Endothelial cell of umbilical vein (primary cell): ENCODE measurements at regions of chr7 and their contacts with region 1.

Region 1: GRCh38 chr7:87416682-87417587 is 58.5 kb downstream of the ABCB4 start:
- DNase-seq: peak; percentile 84
- H3K4me3 ChIP-seq: no peak overlapping the region
- H3K27ac ChIP-seq: no peak overlapping the region
- H3K4me1 ChIP-seq: no peaks in the 10 kb centered on the region
- H3K27me3 ChIP-seq: peaks cover 8 to 12% of the 10 kb centered on the region in 2 experiments
- CTCF ChIP-seq: peak; percentile 41 to 44
- POLR2A ChIP-seq: no peak

Region 2: GRCh38 chr7:87231256-87231655 is 185.7 kb before region 1 on chr7:
- CTCF ChIA-PET with region 1: no interaction called
- POLR2A ChIA-PET with region 1: no interaction called
- dilution Hi-C with region 1: no loop called
- intact Hi-C with region 1: loop called (anchors 2 kb)
- DNase-seq: no peak
- H3K4me3 ChIP-seq: no peak overlapping the region
- H3K27ac ChIP-seq: no peak overlapping the region
- H3K4me1 ChIP-seq: no peaks in the 10 kb centered on the region
- H3K27me3 ChIP-seq: peaks cover 2 to 21% of the 10 kb centered on the region in 2 experiments
- CTCF ChIP-seq: no peak
- POLR2A ChIP-seq: no peak

Region 3: GRCh38 chr7:87322912-87323424 is 94.0 kb before region 1 on chr7:
- CTCF ChIA-PET with region 1: interaction called, 299 read pairs
- POLR2A ChIA-PET with region 1: no interaction called
- dilution Hi-C with region 1: loop called (anchors 25 kb)
- intact Hi-C with region 1: no loop called
- DNase-seq: no peak
- H3K4me3 ChIP-seq: no peak overlapping the region
- H3K27ac ChIP-seq: no peak overlapping the region
- H3K4me1 ChIP-seq: no peaks in the 10 kb centered on the region
- H3K27me3 ChIP-seq: no peaks in the 10 kb centered on the region
- CTCF ChIP-seq: no peak
- POLR2A ChIP-seq: no peak

Region 4: GRCh38 chr7:87398446-87398845 is 18.5 kb before region 1 on chr7:
- CTCF ChIA-PET with region 1: interaction called, 11 read pairs
- POLR2A ChIA-PET with region 1: no interaction called
- dilution Hi-C with region 1: no loop called
- intact Hi-C with region 1: no loop called
- DNase-seq: no peak
- H3K4me3 ChIP-seq: no peak overlapping the region
- H3K27ac ChIP-seq: no peak overlapping the region
- H3K4me1 ChIP-seq: no peaks in the 10 kb centered on the region
- H3K27me3 ChIP-seq: no peaks in the 10 kb centered on the region
- CTCF ChIP-seq: no peak
- POLR2A ChIP-seq: no peak

Region 5: DNA sequence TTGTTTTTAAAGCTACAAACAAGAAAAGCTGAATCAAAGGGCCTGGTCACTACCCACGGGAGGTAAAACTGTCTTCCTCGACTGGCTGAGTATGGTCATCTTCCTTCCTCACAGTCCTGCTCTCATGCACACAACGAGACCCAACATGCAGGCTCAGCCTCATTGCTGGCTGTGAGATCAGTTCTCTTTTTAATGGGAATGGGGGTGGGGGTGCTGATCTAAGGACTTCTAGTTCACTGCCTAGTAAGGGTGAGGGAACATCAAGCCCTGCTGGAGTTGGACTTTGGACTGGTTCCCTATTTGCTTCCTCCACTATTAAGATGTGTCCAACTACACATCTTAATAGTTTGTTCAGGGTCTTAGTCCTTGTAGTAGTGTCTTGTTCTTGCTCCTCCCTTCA is 10.4 kb after region 1 on chr7:
- CTCF ChIA-PET with region 1: interaction called, 10 read pairs
- POLR2A ChIA-PET with region 1: no interaction called
- dilution Hi-C with region 1: no loop called
- intact Hi-C with region 1: no loop called
- DNase-seq: no peak
- H3K4me3 ChIP-seq: no peak overlapping the region
- H3K27ac ChIP-seq: no peak overlapping the region
- H3K4me1 ChIP-seq: no peaks in the 10 kb centered on the region
- H3K27me3 ChIP-seq: peaks cover 2% of the 10 kb centered on the region in 2 experiments
- CTCF ChIP-seq: no peak
- POLR2A ChIP-seq: no peak

Region 6: GRCh38 chr7:87528741-87529140 is 111.8 kb after region 1 on chr7:
- CTCF ChIA-PET with region 1: no interaction called
- POLR2A ChIA-PET with region 1: no interaction called
- dilution Hi-C with region 1: no loop called
- intact Hi-C with region 1: no loop called
- DNase-seq: no peak
- H3K4me3 ChIP-seq: no peak overlapping the region
- H3K27ac ChIP-seq: no peak overlapping the region
- H3K4me1 ChIP-seq: no peaks in the 10 kb centered on the region
- H3K27me3 ChIP-seq: no peaks in the 10 kb centered on the region
- CTCF ChIP-seq: no peak
- POLR2A ChIP-seq: no peak